ENCODE measurements at regions of chr12 and their contacts with region 1.

Region 1: DNA sequence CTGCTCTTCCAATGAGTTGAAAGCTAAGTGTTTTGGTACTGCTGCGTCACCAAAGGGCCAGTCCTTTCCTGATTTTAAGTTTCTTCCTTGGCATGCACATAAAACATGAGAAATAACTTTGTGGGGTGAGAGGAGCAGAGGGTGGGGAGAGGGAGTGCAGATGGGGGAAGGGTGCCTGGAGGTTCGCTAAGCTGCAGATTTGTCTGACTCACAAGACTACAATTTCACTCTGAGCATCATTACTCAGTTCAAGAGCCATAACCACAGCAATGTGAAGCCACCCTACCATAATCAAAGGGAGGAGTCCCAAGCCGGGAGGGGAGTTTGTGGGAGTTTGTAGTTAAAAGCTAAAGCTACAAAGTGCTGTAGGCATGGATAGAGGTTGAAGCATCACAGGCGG is 136.1 kb downstream of the ANO2 start:
- DNase-seq: no peak
- H3K4me3 ChIP-seq: no peak overlapping the region
- H3K27ac ChIP-seq: no peak overlapping the region
- H3K4me1 ChIP-seq: no peaks in the 10 kb centered on the region
- H3K27me3 ChIP-seq: no peaks in the 10 kb centered on the region
- CTCF ChIP-seq: no peak

Region 2: GRCh38 chr12:5756338-5756842 is 52.6 kb before region 1 on chr12:
- dilution Hi-C with region 1: loop called (anchors 5 kb)
- DNase-seq: no peak
- H3K4me3 ChIP-seq: no peak overlapping the region
- H3K27ac ChIP-seq: no peak overlapping the region
- H3K4me1 ChIP-seq: no peaks in the 10 kb centered on the region
- H3K27me3 ChIP-seq: no peaks in the 10 kb centered on the region
- CTCF ChIP-seq: no peak

Region 3: DNA sequence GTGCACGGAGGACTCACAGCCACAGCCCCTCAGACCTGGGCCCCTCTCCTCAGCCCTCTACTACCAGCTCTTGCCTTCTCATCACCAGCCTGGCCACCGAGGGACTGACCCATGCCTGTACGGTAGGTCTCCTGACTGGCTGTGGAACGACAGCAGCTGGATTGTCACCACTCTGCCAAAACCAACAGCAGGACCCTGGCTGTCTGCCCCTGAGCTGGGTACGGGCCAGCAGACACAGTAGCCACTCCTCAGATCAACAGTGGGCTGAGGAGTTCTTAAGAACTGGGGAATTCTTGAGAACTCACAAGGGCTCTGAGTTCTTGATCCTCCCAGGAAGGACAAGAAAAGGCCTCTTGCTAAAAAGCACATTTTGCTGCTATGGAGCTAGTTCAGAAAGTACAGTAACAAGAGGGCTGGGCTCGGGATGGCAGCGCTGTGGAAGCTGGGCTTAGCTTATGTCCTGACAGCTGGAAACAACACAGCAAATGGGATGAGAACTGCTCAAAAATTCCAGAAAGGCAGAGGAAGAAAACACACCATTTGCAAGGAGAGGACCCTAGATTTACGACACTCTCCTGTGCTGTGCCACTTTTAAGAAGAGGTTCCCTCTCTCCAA is 40.3 kb before region 1 on chr12:
- dilution Hi-C with region 1: no loop called
- DNase-seq: no peak
- H3K4me3 ChIP-seq: no peak overlapping the region
- H3K27ac ChIP-seq: no peak overlapping the region
- H3K4me1 ChIP-seq: no peaks in the 10 kb centered on the region
- H3K27me3 ChIP-seq: no peaks in the 10 kb centered on the region
- CTCF ChIP-seq: no peak

Measured in keratinocyte (primary cell).